Naive thymus-derived CD8-positive, alpha-beta T cell (primary cell): ENCODE measurements at regions of chr3 and their contacts with region 1.

Region 1: DNA sequence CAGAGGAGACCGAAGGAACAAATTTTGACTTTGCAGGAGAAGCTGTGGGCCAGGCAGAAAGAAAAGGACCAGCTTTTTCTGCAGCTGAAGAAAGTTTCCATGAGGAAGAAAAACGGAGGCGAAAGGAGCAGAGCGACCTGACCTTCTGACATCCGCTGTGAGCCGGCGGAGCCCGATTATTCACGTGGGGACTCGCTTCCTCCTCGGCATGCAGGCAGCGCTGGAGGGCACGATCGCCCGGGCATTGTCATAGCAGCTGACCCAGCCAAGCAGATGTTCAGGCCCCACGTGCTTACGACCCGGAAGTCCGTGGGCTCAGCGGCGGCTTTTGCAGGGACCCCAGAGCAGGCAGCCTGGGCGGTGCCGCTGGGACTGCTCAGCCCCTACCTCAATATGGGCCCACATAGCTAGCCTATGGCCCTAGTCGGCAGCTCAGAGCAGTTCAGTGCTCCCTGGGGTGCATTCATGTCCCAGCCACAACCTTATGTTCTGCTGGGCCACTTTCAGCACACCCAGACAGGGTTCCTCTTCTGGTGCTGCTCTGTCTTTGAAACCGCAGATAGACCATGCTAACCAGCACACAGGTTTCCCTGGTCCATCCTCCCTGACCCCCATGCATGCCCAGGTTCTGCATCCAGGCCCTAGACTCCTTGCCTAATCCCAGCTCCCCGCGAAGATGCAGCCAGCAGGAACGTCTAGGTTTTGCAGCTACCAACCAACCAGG is 10.5 kb upstream of the EIF4A2 start:
- DNase-seq: peak; percentile 13 to 75 (median 49)
- ATAC-seq: peak; percentile 82 to 87
- H3K4me3 Mint-ChIP-seq: peak overlapping the region; percentile 87 to 98 (median 92)
- H3K27ac Mint-ChIP-seq: peak overlapping the region; percentile 88 to 97 (median 94)
- H3K4me1 Mint-ChIP-seq: peaks cover 7 to 18% (median 17%) of the 10 kb centered on the region in 4 donors
- H3K27me3 Mint-ChIP-seq: no peaks in the 10 kb centered on the region

Region 2: DNA sequence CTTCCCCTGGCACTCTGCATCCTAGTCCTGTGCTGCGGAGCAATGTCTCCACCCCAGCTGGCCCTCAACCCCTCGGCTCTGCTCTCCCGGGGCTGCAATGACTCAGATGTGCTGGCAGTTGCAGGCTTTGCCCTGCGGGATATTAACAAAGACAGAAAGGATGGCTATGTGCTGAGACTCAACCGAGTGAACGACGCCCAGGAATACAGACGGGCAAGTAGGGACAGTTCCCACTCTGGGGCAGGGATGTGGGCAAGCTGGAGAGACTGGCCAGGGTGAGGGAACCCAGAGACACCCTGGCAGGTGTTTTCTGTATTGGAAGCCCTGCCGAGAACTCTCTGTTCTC is 132.4 kb before region 1 on chr3:
- POLR2A ChIA-PET with region 1: no interaction called
- DNase-seq: no peak
- ATAC-seq: no peak
- H3K4me3 Mint-ChIP-seq: no peak overlapping the region
- H3K27ac Mint-ChIP-seq: no peak overlapping the region
- H3K4me1 Mint-ChIP-seq: no peaks in the 10 kb centered on the region
- H3K27me3 Mint-ChIP-seq: peaks cover 0 to 22% (median 8%) of the 10 kb centered on the region in 5 donors

Region 3: GRCh38 chr3:186719945-186720739 is 52.7 kb before region 1 on chr3:
- POLR2A ChIA-PET with region 1: no interaction called
- DNase-seq: no peak
- ATAC-seq: no peak
- H3K4me3 Mint-ChIP-seq: no peak overlapping the region
- H3K27ac Mint-ChIP-seq: no peak overlapping the region
- H3K4me1 Mint-ChIP-seq: peaks cover 0 to 2% (median under 1%) of the 10 kb centered on the region in 4 donors
- H3K27me3 Mint-ChIP-seq: peaks cover 0 to 5% (median 0%) of the 10 kb centered on the region in 5 donors

Region 4: DNA sequence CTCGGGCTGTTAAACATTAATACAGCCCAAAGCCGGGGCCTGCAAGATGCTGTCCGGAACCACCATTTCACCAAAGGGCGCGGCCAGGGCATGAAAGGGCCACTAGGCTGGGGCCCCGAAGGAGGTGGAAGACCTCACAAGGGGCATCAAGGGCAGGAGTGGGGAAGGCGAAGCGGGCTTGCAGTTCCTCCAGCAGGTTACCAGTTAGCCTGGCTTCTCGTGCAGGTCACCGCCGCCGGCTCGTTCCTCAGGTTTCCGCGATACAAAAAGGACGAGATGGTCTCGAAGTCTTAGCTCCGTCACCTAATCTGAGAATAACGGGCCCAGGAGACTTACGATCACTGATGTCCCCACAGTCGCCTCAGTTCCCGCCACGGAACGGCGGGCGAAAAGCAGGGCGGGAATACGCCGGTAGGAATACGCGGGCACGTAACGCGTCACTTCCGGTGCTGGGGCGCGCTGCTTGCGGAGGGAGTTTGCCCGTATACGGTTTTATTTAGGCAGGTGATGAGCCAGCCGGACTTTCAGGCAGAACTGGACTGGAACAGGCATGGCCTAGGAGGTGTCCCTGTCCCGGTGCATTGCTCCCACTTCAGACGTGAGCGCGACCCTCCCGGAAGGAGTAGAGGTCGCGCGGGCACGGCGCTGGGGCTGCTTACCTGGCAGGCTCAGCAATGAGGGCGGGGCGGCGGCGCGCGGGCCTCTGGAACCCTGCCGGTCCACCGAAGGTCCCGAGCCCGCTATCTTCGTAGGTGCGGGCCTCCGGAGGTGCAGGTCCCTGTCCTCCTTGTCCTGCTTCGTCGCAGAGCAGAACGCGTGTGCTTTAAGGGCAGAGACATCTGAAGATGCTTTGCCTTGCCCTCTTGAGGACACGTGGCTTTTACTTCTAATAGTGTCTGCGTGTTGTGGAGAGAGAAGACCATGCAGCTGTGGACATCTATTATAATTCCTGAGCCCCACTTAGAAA is 33.5 kb after region 1 on chr3 and contains the start of gene RFC4:
- POLR2A ChIA-PET with region 1: interaction called, 13 read pairs
- DNase-seq: peak; percentile 68 to 90 (median 80)
- ATAC-seq: peak; percentile 86 to 87
- H3K4me3 Mint-ChIP-seq: peak within 1 kb of the TSS; percentile 84 to 97 (median 96)
- H3K27ac Mint-ChIP-seq: peak within 1 kb of the TSS; percentile 93 to 99 (median 96)
- H3K4me1 Mint-ChIP-seq: peaks cover 4 to 31% (median 21%) of the 10 kb centered on the region in 4 donors
- H3K27me3 Mint-ChIP-seq: no peaks in the 10 kb centered on the region
- polyA plus RNA-seq, gene RFC4: 19.2 to 22.8 (median 21.4) TPM